Aorta (tissue), 5 donors: ENCODE measurements at regions of chr4 and their contacts with region 1.

Region 1: DNA sequence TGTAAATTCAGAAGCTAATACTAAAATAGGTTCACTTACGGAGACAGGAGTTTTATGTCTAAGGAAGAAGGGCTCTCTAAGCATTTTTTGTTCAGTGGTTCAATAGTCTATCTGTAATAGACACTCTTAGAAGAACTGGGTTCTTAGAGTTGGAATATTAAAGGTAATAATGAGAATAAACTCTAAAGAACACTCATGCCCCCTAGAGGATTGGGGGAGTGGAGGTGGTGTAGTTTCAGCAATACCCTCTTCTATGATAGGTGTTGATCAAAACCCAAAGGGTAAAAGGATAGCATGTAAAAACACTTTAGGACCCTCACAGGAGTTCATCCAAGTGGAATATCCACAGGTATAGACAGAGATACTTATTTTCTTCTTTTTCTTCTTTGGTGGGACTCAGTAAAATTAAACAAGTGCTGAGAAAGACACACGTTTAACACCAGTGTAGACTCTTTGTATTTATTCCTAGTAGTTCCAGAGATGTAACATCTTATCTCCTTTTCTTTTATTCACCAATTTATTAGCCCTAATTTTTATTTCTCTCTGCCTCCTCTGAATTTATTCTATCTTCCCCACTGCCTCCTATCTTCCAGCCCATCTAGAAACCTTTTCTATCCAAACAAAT is 25.7 kb upstream of the MND1 start:
- DNase-seq: no peak
- ATAC-seq: peak; percentile 65
- H3K4me3 ChIP-seq: no peak overlapping the region
- H3K27ac ChIP-seq: no peak overlapping the region
- H3K4me1 ChIP-seq: no peaks in the 10 kb centered on the region
- H3K27me3 ChIP-seq: no peaks in the 10 kb centered on the region

Region 2: GRCh38 chr4:153204247-153205027 is 114.4 kb before region 1 on chr4 and contains the start of gene TRIM2:
- intact Hi-C with region 1: loop called (anchors 5 kb)
- DNase-seq: peak in 1 of 2 donors; percentile 58
- ATAC-seq: peak; percentile 78
- H3K4me3 ChIP-seq: no peak within 1 kb of the TSS
- H3K27ac ChIP-seq: no peak within 1 kb of the TSS
- H3K4me1 ChIP-seq: no peaks in the 10 kb centered on the region
- H3K27me3 ChIP-seq: no peaks in the 10 kb centered on the region
- total RNA-seq, gene TRIM2: 27.6 to 53.4 TPM